ENCODE measurements at regions of chr11 and their contacts with region 1.

Region 1: DNA sequence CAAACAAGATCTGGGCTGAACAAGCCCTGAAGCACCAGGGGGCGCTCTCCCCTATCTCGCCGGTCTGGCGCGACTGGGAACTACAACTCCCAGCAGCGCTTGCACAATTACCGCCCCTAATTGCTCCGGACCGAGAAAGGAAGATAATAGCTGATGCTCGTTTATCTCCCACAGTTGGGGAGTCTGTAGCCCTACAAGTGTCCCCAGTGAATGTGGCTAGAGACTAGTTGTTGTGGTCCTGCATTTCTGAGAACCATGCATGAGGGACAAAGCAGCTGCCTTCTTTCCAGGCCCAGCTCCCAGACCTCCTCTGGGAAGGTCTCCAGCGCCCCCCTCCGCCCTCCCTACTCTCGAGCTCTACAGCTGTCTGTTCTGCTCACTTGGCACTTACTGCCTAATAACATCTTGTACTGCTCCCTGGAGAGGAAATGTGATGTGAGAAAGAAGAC is 34.4 kb downstream of the NRXN2 start:
- DNase-seq: peak; percentile 76
- ATAC-seq: peak; percentile 97
- H3K4me3 ChIP-seq: peak overlapping the region; percentile 26 to 46
- H3K27ac ChIP-seq: no peak overlapping the region
- H3K4me1 ChIP-seq: no peaks in the 10 kb centered on the region
- H3K27me3 ChIP-seq: peaks cover 7% of the 10 kb centered on the region
- CTCF ChIP-seq: peak; percentile 99

Region 2: DNA sequence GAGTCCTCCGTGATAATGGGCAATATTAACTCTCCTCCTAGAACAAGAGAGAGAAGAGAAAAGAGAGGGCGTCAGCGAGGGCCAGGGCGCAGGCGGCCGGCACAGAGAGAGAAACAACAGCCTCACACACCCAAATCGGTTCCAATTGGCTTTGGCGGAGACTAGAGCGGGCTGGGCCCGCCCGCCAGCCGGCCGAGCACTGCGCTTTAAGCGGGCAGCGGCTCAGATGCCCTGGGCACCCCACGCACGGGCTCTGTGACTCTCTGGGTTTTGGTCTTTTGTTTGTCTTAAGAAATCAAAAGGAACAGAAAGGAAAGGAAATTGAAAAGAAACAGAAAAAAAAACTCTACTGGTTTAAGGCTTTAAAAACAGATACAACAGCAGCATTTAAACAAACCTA is 80.5 kb before region 1 on chr11:
- CTCF ChIA-PET with region 1: no interaction called
- POLR2A ChIA-PET with region 1: no interaction called
- in situ Hi-C with region 1: no loop called
- intact Hi-C with region 1: no loop called
- DNase-seq: no peak
- ATAC-seq: no peak
- H3K4me3 ChIP-seq: no peak overlapping the region
- H3K27ac ChIP-seq: no peak overlapping the region
- H3K4me1 ChIP-seq: 0 out of 2 replicates have a peak, but pooled peaks cover 3% of the 10 kb centered on the region
- H3K27me3 ChIP-seq: no peaks in the 10 kb centered on the region
- CTCF ChIP-seq: no peak

Region 3: GRCh38 chr11:64729851-64730382 is 41.4 kb after region 1 on chr11:
- CTCF ChIA-PET with region 1: interaction called, 12 read pairs
- POLR2A ChIA-PET with region 1: no interaction called
- in situ Hi-C with region 1: no loop called
- intact Hi-C with region 1: no loop called
- DNase-seq: no peak
- ATAC-seq: peak; percentile 65
- H3K4me3 ChIP-seq: no peak overlapping the region
- H3K27ac ChIP-seq: no peak overlapping the region
- H3K4me1 ChIP-seq: peaks cover 3% of the 10 kb centered on the region; the same call in 1 of the 2 replicates
- H3K27me3 ChIP-seq: no peaks in the 10 kb centered on the region
- CTCF ChIP-seq: no peak

Region 4: DNA sequence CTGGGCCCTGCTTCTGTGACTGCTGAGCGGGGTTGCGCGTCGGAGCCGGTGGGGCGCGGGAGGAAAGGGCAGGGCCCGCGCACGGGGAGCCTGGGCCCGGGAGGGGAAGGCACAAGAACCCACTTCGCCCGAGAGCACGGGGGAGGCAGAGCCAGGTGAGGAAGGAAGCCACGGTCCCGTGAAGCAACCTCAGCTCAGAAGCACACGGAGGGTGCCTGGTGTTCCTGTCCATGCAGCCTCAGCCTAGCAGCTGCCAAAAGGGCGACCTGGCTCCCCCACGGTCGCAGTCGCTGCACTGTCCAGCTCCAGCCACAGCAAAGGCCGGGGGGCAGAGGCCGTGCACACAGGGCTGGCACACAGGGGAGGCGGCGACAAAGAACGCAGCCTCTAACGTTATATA is 165.2 kb after region 1 on chr11:
- CTCF ChIA-PET with region 1: no interaction called
- POLR2A ChIA-PET with region 1: interaction called, 12 read pairs
- in situ Hi-C with region 1: no loop called
- intact Hi-C with region 1: no loop called
- DNase-seq: no peak
- ATAC-seq: no peak
- H3K4me3 ChIP-seq: no peak overlapping the region
- H3K27ac ChIP-seq: peak overlapping the region; percentile 98
- H3K4me1 ChIP-seq: peaks cover 88% of the 10 kb centered on the region
- H3K27me3 ChIP-seq: no peaks in the 10 kb centered on the region
- CTCF ChIP-seq: no peak